Heart left ventricle (tissue), 16 donors: ENCODE measurements at regions of chr4 and their contacts with region 1.

Region 1: GRCh38 chr4:126627255-126627654 is 1005.5 kb upstream of the INTU start:
- DNase-seq: no peak
- ATAC-seq: no peak
- H3K4me3 ChIP-seq: no peak overlapping the region
- H3K27ac ChIP-seq: no peak overlapping the region
- H3K4me1 ChIP-seq: peaks cover 0 to 4% (median 0%) of the 10 kb centered on the region in 12 donors
- H3K27me3 ChIP-seq: no peaks in the 10 kb centered on the region
- CTCF ChIP-seq: peak in 6 of 12 donors; percentile 7 to 31 (median 24)
- POLR2A ChIP-seq: no peak

Region 2: DNA sequence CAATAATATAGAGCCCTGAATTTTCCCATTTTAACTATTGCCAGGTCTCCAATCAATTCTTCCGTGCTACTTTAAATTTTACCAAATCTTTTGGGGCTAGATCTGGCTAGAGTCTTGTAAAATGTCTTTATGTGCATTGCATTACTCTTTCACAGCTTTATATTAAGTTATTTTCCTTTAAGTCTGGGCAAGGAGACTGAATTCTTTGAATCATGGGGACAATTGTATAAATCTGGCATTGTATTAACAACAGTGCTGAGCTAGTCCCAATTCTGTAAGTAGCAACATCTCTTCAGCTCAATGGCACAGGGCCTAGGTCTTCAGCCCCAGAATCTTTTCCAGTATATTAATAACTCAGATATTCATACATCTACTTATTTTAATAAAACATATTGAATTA is 74.9 kb before region 1 on chr4:
- intact Hi-C with region 1: no loop called
- DNase-seq: no peak
- ATAC-seq: no peak
- H3K4me3 ChIP-seq: no peak overlapping the region
- H3K27ac ChIP-seq: no peak overlapping the region
- H3K4me1 ChIP-seq: no peaks in the 10 kb centered on the region
- H3K27me3 ChIP-seq: no peaks in the 10 kb centered on the region
- CTCF ChIP-seq: no peak
- POLR2A ChIP-seq: no peak

Region 3: GRCh38 chr4:126568652-126569570 is 58.3 kb before region 1 on chr4:
- intact Hi-C with region 1: no loop called
- DNase-seq: no peak
- ATAC-seq: peak in 1 of 4 donors; percentile 36
- H3K4me3 ChIP-seq: no peak overlapping the region
- H3K27ac ChIP-seq: peak overlapping the region in 3 of 12 donors; percentile 18 to 39 (median 21)
- H3K4me1 ChIP-seq: no peaks in the 10 kb centered on the region
- H3K27me3 ChIP-seq: no peaks in the 10 kb centered on the region
- CTCF ChIP-seq: no peak
- POLR2A ChIP-seq: no peak

Region 4: GRCh38 chr4:126799971-126800574 is 172.8 kb after region 1 on chr4:
- intact Hi-C with region 1: loop called in 1 of 10 experiments (anchors 10 kb)
- DNase-seq: no peak
- ATAC-seq: no peak
- H3K4me3 ChIP-seq: no peak overlapping the region
- H3K27ac ChIP-seq: no peak overlapping the region
- H3K4me1 ChIP-seq: peaks cover 0 to 3% (median 0%) of the 10 kb centered on the region in 12 donors
- H3K27me3 ChIP-seq: no peaks in the 10 kb centered on the region
- CTCF ChIP-seq: no peak
- POLR2A ChIP-seq: no peak

Region 5: DNA sequence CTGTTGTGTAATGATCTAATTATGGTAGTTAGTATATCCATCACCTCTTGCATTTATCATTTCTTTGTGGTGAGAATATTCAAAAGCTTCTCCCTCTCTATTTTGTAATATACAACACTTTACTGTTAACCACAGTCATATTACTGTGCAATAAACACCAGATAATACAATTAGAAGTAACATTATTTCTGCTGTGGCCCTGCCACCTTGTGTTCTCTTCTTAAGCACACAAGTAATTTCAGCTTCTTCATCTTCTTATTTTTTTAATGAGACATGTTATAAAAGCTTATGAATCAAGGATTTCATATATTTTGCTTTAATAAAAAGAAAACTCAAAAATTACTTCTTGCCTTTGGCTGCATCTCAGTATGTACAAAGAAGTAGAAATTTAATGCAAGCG is 330.3 kb after region 1 on chr4:
- intact Hi-C with region 1: loop called in 1 of 10 experiments (anchors 10 kb)
- DNase-seq: no peak
- ATAC-seq: peak in 1 of 4 donors; percentile 32
- H3K4me3 ChIP-seq: no peak overlapping the region
- H3K27ac ChIP-seq: no peak overlapping the region
- H3K4me1 ChIP-seq: peaks cover 0 to 6% (median 0%) of the 10 kb centered on the region in 12 donors
- H3K27me3 ChIP-seq: no peaks in the 10 kb centered on the region
- CTCF ChIP-seq: peak in 6 of 12 donors; percentile 12 to 47 (median 28)
- POLR2A ChIP-seq: no peak